ENCODE measurements at regions of chr14 and their contacts with region 1.

Region 1: GRCh38 chr14:21852061-21852664 is 178.5 kb upstream of the OR4E1 start:
- DNase-seq: peak; percentile 83
- H3K4me3 Mint-ChIP-seq: peak overlapping the region; percentile 68
- H3K27ac Mint-ChIP-seq: peak overlapping the region; percentile 90
- H3K4me1 Mint-ChIP-seq: peaks cover 10% of the 10 kb centered on the region
- H3K27me3 Mint-ChIP-seq: peaks cover 3% of the 10 kb centered on the region

Region 2: DNA sequence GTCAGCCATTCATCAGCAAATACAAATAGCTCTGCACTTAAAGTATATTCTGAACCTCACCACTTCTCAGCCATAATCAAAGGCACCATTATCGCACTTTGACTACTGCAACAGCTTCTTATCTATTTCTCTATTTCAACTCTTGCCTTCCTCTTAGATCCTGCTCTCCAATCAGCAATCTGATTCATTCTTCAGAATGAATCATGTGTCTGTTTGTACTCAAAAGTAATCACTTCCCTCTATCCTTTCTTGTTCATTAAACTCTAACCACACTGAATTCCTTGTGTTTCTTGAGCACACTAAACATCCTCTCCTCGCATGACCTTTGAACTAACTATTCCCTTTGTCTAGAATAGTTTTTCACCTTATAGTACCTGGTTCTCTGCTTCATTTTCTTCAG is 165.7 kb before region 1 on chr14:
- CTCF ChIA-PET with region 1: no interaction called
- POLR2A ChIA-PET with region 1: no interaction called
- intact Hi-C with region 1: no loop called
- DNase-seq: no peak
- H3K4me3 Mint-ChIP-seq: no peak overlapping the region
- H3K27ac Mint-ChIP-seq: no peak overlapping the region
- H3K4me1 Mint-ChIP-seq: no peaks in the 10 kb centered on the region
- H3K27me3 Mint-ChIP-seq: peaks cover 22% of the 10 kb centered on the region

Region 3: DNA sequence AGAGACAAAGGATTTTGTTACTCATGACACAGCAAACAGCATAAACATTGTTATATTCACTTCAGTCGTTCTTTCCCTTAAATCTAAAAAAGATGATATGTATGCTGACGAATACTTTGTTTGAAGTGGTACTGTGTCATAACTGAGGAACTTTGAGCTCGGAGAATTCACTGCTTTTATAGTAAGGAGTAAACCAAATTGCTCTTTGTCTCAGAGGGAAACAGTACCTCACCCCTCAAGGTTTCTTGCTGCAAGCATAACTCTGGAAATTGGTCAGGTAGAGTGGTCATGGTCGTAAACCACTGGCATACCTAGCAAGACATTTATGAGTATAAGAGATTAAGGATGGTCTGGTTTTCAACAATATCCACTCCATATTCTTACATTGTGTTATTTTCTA is 18.3 kb before region 1 on chr14:
- CTCF ChIA-PET with region 1: interaction called, 12 read pairs
- POLR2A ChIA-PET with region 1: no interaction called
- intact Hi-C with region 1: no loop called
- DNase-seq: no peak
- H3K4me3 Mint-ChIP-seq: no peak overlapping the region
- H3K27ac Mint-ChIP-seq: no peak overlapping the region
- H3K4me1 Mint-ChIP-seq: no peaks in the 10 kb centered on the region
- H3K27me3 Mint-ChIP-seq: peaks cover 17% of the 10 kb centered on the region

Region 4: GRCh38 chr14:21840765-21841164 is 11.4 kb before region 1 on chr14:
- CTCF ChIA-PET with region 1: interaction called, 80 read pairs
- POLR2A ChIA-PET with region 1: no interaction called
- intact Hi-C with region 1: no loop called
- DNase-seq: no peak
- H3K4me3 Mint-ChIP-seq: peak overlapping the region; percentile 53
- H3K27ac Mint-ChIP-seq: peak overlapping the region; percentile 64
- H3K4me1 Mint-ChIP-seq: peaks cover 4% of the 10 kb centered on the region
- H3K27me3 Mint-ChIP-seq: peaks cover 13% of the 10 kb centered on the region

Region 5: GRCh38 chr14:21868442-21869046 is 16.4 kb after region 1 on chr14:
- CTCF ChIA-PET with region 1: interaction called, 80 read pairs
- POLR2A ChIA-PET with region 1: interaction called, 4 read pairs
- intact Hi-C with region 1: loop called (anchors 2 kb)
- DNase-seq: peak; percentile 89
- H3K4me3 Mint-ChIP-seq: peak overlapping the region; percentile 68
- H3K27ac Mint-ChIP-seq: peak overlapping the region; percentile 82
- H3K4me1 Mint-ChIP-seq: peaks cover 41% of the 10 kb centered on the region
- H3K27me3 Mint-ChIP-seq: no peaks in the 10 kb centered on the region

Region 6: GRCh38 chr14:21874167-21874566 is 22.0 kb after region 1 on chr14:
- CTCF ChIA-PET with region 1: interaction called, 15 read pairs
- POLR2A ChIA-PET with region 1: interaction called, 4 read pairs
- intact Hi-C with region 1: loop called (anchors 2 kb)
- DNase-seq: no peak
- H3K4me3 Mint-ChIP-seq: peak overlapping the region; percentile 39
- H3K27ac Mint-ChIP-seq: peak overlapping the region; percentile 58
- H3K4me1 Mint-ChIP-seq: peaks cover 36% of the 10 kb centered on the region
- H3K27me3 Mint-ChIP-seq: no peaks in the 10 kb centered on the region